Prostate gland (tissue), 2 donors: ENCODE measurements at regions of chr15 and their contacts with region 1.

Region 1: GRCh38 chr15:81880314-81880713 is 165.5 kb downstream of the MEX3B start:
- DNase-seq: no peak
- H3K4me3 ChIP-seq: no peak overlapping the region
- H3K27ac ChIP-seq: no peak overlapping the region
- H3K4me1 ChIP-seq: no peaks in the 10 kb centered on the region
- H3K27me3 ChIP-seq: no peaks in the 10 kb centered on the region
- CTCF ChIP-seq: no peak
- POLR2A ChIP-seq: no peak

Region 2: DNA sequence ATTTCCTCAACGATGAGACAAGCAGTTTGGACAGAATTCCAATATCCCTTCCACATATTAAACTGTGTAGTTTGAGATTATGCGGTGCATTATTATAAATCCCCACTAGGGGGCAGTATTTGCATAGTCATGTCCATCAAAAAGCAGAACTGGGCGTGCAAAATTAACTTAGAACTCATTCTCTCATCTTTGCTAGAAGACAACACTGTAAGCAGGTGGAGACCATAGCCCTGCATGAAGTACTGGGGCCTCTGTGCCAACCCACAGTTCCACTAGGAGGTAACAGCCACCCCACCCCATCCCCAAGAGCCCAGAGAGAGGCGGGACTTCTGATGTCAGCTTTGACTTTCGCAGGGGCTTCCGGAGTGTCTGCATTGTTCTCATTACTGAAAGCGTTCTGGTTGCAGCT is 399.7 kb before region 1 on chr15:
- intact Hi-C with region 1: no loop called
- DNase-seq: peak; percentile 56
- H3K4me3 ChIP-seq: no peak overlapping the region
- H3K27ac ChIP-seq: no peak overlapping the region
- H3K4me1 ChIP-seq: no peaks in the 10 kb centered on the region
- H3K27me3 ChIP-seq: no peaks in the 10 kb centered on the region
- CTCF ChIP-seq: peak; percentile 73 to 97 (median 84)
- POLR2A ChIP-seq: no peak

Region 3: DNA sequence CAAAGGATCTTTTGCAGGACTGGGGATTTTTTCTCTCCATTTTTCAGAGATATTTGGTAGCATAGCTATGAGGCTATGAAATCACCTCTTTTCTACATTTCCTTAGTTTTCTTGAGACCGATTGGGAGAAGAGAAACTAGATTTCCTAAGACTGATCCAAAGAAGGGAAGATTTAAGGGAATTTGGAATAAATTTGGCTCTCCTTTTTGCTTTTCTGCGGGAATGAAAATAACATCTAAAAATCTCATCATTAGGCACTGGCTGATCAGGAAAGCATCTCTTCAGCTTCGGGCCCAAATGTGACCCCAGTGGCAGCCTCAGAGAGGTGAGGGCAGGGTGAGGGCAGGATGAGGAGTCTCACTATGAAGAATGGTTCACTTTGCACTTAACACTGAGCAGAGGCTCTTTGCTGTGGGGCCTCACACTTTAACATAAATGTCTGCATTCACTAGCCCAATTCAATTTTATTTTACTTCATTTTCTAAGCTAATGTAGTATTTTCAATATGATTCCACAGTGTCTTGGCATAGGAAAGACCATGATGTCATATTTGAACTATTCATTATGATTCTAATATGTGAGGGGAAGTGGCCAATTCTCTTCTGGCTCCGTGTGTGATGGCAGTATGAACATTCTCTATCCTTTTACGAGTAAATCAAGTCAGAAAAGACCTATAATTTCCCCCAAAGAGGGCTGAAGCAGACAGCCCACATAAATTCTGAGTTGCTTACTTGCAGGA is 27.7 kb before region 1 on chr15:
- intact Hi-C with region 1: loop called (anchors 2 kb)
- DNase-seq: no peak
- H3K4me3 ChIP-seq: no peak overlapping the region
- H3K27ac ChIP-seq: no peak overlapping the region
- H3K4me1 ChIP-seq: no peaks in the 10 kb centered on the region
- H3K27me3 ChIP-seq: no peaks in the 10 kb centered on the region
- CTCF ChIP-seq: no peak
- POLR2A ChIP-seq: no peak